Activated CD4-positive, alpha-beta T cell treated with anti-CD3 and anti-CD28 coated beads for 36 hours (primary cell): ENCODE measurements at regions of chr10 and their contacts with region 1.

Region 1: DNA sequence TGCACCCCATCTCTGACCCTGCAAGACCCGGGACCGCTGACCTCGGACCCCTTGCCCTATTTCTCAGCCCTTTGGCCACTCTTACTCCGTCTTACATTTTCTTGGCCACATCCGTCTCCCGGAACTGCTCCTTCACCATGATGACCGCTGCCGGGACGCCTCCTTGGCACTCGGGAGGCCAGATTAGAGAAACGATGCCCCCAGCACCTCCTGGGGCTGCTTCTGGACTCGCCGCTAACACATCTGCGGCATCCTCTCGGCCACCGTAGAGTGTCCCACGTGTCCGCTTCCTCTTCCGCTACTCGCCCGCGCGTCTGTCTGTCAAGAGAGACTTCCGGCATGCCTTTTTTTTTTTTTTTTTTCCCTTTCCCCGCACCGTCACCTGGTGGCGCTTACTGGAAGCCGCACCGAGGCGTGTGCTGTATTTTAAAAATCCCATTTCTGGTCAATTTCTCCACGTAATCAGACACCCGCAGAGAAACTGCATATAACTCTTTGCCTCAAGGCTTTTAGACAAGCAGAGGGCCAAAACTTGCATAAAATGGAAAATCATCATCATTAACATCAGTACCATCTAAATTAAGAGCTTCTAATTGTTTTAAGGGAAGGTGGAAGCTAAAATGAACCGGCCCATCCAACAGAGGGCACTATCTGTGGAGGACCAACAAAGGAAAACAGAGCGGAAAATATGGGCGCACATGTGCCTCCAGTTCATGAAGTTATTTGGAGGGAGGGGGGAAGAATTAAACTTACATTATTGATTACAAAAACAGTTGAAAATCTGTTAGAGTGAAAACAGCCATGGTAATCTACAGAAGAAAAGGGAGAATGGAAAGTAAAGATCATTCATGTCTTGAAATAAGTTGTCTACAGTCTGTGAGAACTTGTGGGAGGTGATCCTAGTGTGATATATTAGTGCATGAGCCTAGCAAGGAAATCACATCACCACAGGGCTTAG is at the start of gene POLR3A:
- DNase-seq: peak; percentile 96
- ATAC-seq: peak; percentile 65
- H3K4me3 Mint-ChIP-seq: peak within 1 kb of the TSS; percentile 99
- H3K27ac Mint-ChIP-seq: peak within 1 kb of the TSS; percentile 98
- H3K4me1 Mint-ChIP-seq: peaks cover 34% of the 10 kb centered on the region
- H3K27me3 Mint-ChIP-seq: no peaks in the 10 kb centered on the region
- total RNA-seq, gene POLR3A: 18.3 to 19.3 TPM

Region 2: GRCh38 chr10:77837240-77837924 is 192.2 kb before region 1 on chr10:
- CTCF ChIA-PET with region 1: no interaction called
- POLR2A ChIA-PET with region 1: no interaction called
- intact Hi-C with region 1: loop called in 1 of 2 experiments (anchors 2 kb)
- DNase-seq: peak; percentile 89
- ATAC-seq: peak; percentile 92
- H3K4me3 Mint-ChIP-seq: no peak overlapping the region
- H3K27ac Mint-ChIP-seq: no peak overlapping the region
- H3K4me1 Mint-ChIP-seq: peaks cover 18% of the 10 kb centered on the region
- H3K27me3 Mint-ChIP-seq: no peaks in the 10 kb centered on the region

Region 3: DNA sequence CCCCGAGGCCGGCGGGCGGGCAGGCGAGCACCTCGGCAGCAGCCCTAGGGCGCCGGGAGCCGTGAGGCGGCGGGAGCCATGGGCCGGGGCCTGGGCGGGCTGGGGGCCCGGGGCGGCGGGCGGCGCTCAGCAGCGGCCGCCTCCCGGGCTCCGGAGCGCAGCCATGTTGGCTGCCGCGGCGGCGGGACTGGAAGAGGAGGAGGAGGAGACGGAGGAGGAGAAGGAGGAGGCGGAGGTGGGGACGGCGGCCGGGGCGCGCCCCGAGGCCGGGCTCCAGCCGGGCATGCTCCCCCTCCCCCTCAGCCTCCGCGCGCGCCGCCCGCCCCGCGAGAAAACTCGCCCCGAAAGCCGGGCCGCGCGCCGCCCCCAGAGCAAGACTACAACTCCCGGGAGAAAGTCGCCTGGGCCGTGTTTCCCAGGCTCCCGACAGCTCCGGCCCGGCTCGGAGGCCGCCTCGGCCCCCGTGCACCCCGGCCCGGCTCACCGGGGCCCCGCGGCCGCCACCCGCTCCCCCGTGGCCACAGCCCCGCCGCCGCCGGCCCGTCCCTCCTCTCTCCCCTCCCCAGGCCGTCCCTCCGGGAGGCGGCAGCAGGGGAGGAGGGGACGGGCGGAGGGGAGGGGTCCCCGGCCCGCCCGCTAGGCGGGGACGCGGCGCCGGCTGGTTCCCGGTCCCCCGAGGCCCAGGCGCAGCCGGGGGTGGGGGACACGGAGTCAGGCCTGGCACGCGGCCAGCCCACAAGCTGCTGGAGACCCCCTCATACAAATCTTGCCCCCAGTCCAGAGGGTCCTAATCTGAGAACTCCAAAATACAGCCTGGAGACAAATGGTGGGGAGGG is 102.8 kb before region 1 on chr10 and contains the start of gene DLG5:
- CTCF ChIA-PET with region 1: no interaction called
- POLR2A ChIA-PET with region 1: no interaction called
- intact Hi-C with region 1: loop called in 1 of 2 experiments (anchors 5 kb)
- DNase-seq: peak; percentile 48
- ATAC-seq: peak; percentile 71
- H3K4me3 Mint-ChIP-seq: peak within 1 kb of the TSS; percentile 60
- H3K27ac Mint-ChIP-seq: peak within 1 kb of the TSS; percentile 21
- H3K4me1 Mint-ChIP-seq: peaks cover 7% of the 10 kb centered on the region
- H3K27me3 Mint-ChIP-seq: peaks cover 42% of the 10 kb centered on the region
- total RNA-seq, gene DLG5: 2.1 to 2.3 TPM

Region 4: DNA sequence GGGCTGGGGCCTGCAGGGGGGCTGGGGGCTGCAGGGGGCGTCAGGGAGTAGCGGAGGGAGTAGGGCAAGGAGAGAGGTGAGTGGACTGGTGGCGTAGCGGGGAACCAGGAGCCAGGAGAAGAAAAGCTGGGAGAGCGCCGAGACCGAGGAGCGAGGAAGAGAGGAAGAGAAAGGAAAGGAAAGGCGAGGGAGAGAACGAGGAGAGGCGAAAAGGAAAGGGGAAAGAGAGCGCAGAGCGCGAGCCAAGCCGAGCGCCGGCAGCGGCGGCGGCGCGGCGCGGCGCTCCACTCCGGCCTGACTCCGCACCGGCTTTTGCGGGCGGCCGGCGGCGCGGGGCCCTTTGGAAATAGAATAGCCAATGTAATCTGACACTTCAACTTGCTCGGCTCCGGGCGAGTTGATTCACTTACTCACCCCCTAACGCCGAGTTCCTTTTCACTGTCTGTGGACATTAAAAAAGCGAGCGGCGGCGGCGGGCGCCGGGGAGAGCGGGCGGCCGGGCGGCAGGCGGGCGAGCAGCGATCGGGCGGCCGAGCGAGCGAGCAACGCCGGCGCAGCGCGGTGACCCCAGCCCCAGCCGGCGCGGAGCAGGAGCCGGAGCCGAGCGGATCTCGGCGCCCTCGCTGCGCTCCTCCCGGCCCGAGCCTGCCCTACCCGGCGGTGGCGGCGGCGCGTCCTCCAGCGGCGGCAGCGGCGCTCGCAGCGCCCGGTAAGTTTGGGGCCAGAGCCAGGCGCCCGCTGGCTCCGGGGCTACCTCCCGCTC is 1039.2 kb after region 1 on chr10 and contains the start of gene ZMIZ1:
- CTCF ChIA-PET with region 1: no interaction called
- POLR2A ChIA-PET with region 1: no interaction called
- intact Hi-C with region 1: loop called (anchors 1 to 5 kb)
- DNase-seq: peak; percentile 89
- ATAC-seq: peak; percentile 72
- H3K4me3 Mint-ChIP-seq: peak within 1 kb of the TSS; percentile 73
- H3K27ac Mint-ChIP-seq: peak within 1 kb of the TSS; percentile 58
- H3K4me1 Mint-ChIP-seq: peaks cover 32% of the 10 kb centered on the region
- H3K27me3 Mint-ChIP-seq: peaks cover 3% of the 10 kb centered on the region
- total RNA-seq, gene ZMIZ1: 33.9 to 34.3 TPM

Region 5: GRCh38 chr10:79445141-79445976 is 1415.8 kb after region 1 on chr10 and contains the start of gene ZCCHC24:
- CTCF ChIA-PET with region 1: no interaction called
- POLR2A ChIA-PET with region 1: no interaction called
- intact Hi-C with region 1: loop called in 1 of 2 experiments (anchors 1 kb)
- DNase-seq: peak; percentile 93
- ATAC-seq: peak; percentile 97
- H3K4me3 Mint-ChIP-seq: peak within 1 kb of the TSS; percentile 65
- H3K27ac Mint-ChIP-seq: no peak within 1 kb of the TSS
- H3K4me1 Mint-ChIP-seq: peaks cover 16% of the 10 kb centered on the region
- H3K27me3 Mint-ChIP-seq: peaks cover 7% of the 10 kb centered on the region
- total RNA-seq, gene ZCCHC24: 0.53 to 0.75 TPM